Caco-2 (cell line): ENCODE measurements at regions of chr17 and their contacts with region 1.

Region 1: GRCh38 chr17:60392042-60392844 is at the start of gene USP32:
- DNase-seq: peak; percentile 98 to 99
- H3K4me3 ChIP-seq: peak within 1 kb of the TSS; percentile 89
- H3K4me3 Mint-ChIP-seq: peak within 1 kb of the TSS; percentile 92
- H3K27ac Mint-ChIP-seq: peak within 1 kb of the TSS; percentile 94
- H3K4me1 ChIP-seq: peaks cover 8% of the 10 kb centered on the region; the same call in 1 of the 2 replicates
- H3K4me1 Mint-ChIP-seq: peaks cover 13% of the 10 kb centered on the region
- H3K27me3 ChIP-seq: no peaks in the 10 kb centered on the region
- H3K27me3 Mint-ChIP-seq: no peaks in the 10 kb centered on the region
- CTCF ChIP-seq: peak; percentile 23 to 40
- total RNA-seq, gene USP32: 50.3 and 53.3 TPM in 2 replicates

Region 2: GRCh38 chr17:60231234-60231633 is 161.0 kb before region 1 on chr17:
- CTCF ChIA-PET with region 1: interaction called, 10 read pairs
- POLR2A ChIA-PET with region 1: no interaction called
- intact Hi-C with region 1: loop called (anchors 5 kb)
- DNase-seq: no peak
- H3K4me3 ChIP-seq: no peak overlapping the region
- H3K4me3 Mint-ChIP-seq: no peak overlapping the region
- H3K27ac Mint-ChIP-seq: peak overlapping the region; percentile 53
- H3K4me1 ChIP-seq: no peaks in the 10 kb centered on the region
- H3K4me1 Mint-ChIP-seq: no peaks in the 10 kb centered on the region
- H3K27me3 ChIP-seq: no peaks in the 10 kb centered on the region
- H3K27me3 Mint-ChIP-seq: no peaks in the 10 kb centered on the region
- CTCF ChIP-seq: peak; percentile 46 to 49

Region 3: DNA sequence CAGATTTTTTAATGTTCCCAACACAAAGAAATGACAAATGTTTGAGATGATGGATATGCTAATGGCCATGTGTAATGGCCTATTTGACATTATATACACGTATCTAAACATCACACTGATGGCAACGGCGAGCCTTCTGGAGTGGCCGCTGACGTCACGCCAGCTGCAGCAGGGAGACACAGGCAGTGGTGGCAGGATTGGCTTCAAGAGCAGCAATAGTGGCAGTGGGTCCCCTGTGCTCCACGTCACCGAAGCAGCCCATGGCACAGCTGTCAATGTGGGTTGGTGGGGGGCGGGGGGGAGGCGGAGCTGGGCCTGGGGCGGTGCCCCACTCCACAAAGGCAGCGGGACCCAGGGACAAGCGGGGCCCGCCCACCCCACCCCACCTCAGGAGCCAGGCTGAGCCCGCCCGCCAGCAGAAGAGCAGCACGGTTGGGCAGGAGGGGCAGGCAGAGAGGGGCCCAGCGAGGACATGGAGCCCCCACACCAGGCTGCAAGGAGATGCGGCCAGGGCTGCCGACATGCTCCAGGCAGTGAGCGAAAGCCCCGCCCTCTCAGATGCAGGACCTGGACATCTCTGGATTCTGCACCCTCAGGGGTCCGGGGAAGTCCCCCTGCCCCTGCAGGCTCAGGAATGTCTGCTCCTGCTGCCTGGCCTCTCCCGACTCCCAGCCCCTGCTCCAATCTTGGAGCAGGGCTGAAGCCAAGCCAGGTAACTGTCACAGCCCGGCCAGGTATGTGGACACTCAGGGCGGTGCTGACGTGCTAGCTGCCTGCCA is 64.9 kb before region 1 on chr17:
- CTCF ChIA-PET with region 1: no interaction called
- POLR2A ChIA-PET with region 1: no interaction called
- intact Hi-C with region 1: loop called (anchors 10 kb)
- DNase-seq: no peak
- H3K4me3 ChIP-seq: no peak overlapping the region
- H3K4me3 Mint-ChIP-seq: no peak overlapping the region
- H3K27ac Mint-ChIP-seq: peak overlapping the region; percentile 60
- H3K4me1 ChIP-seq: peaks cover 11% of the 10 kb centered on the region; the same call in 1 of the 2 replicates
- H3K4me1 Mint-ChIP-seq: no peaks in the 10 kb centered on the region
- H3K27me3 ChIP-seq: no peaks in the 10 kb centered on the region
- H3K27me3 Mint-ChIP-seq: no peaks in the 10 kb centered on the region
- CTCF ChIP-seq: no peak

Region 4: DNA sequence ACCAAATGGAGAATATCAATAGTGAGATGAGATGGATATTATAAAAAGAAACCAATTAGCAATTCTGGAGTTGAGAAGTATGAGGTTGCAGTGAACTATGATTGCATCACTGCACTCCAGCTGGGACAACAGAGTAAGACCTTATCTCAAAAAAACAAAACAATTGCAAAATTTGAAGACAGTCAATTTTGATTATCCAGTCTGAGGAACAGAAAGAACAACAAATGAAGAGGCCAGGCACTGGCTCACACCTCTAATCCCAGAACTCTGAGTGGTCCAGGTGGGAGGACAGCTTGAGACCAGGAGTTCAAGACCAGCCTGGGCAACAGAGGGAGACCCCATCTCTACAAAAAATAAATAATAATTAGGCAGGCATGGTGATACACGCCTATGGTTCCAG is 35.3 kb before region 1 on chr17:
- CTCF ChIA-PET with region 1: interaction called, 10 read pairs
- POLR2A ChIA-PET with region 1: interaction called, 13 read pairs
- intact Hi-C with region 1: loop called (anchors 1 kb)
- DNase-seq: no peak
- H3K4me3 ChIP-seq: no peak overlapping the region
- H3K4me3 Mint-ChIP-seq: no peak overlapping the region
- H3K27ac Mint-ChIP-seq: peak overlapping the region; percentile 47
- H3K4me1 ChIP-seq: peaks cover 12% of the 10 kb centered on the region; the same call in 1 of the 2 replicates
- H3K4me1 Mint-ChIP-seq: peaks cover 25% of the 10 kb centered on the region
- H3K27me3 ChIP-seq: no peaks in the 10 kb centered on the region
- H3K27me3 Mint-ChIP-seq: no peaks in the 10 kb centered on the region
- CTCF ChIP-seq: no peak

Region 5: GRCh38 chr17:60435244-60436167 is 43.3 kb after region 1 on chr17:
- CTCF ChIA-PET with region 1: no interaction called
- POLR2A ChIA-PET with region 1: no interaction called
- intact Hi-C with region 1: loop called (anchors 1 kb)
- DNase-seq: peak; percentile 66 to 79
- H3K4me3 ChIP-seq: no peak overlapping the region
- H3K4me3 Mint-ChIP-seq: no peak overlapping the region
- H3K27ac Mint-ChIP-seq: no peak overlapping the region
- H3K4me1 ChIP-seq: no peaks in the 10 kb centered on the region
- H3K4me1 Mint-ChIP-seq: peaks cover 9% of the 10 kb centered on the region
- H3K27me3 ChIP-seq: no peaks in the 10 kb centered on the region
- H3K27me3 Mint-ChIP-seq: no peaks in the 10 kb centered on the region
- CTCF ChIP-seq: peak; percentile 85 to 93

Region 6: DNA sequence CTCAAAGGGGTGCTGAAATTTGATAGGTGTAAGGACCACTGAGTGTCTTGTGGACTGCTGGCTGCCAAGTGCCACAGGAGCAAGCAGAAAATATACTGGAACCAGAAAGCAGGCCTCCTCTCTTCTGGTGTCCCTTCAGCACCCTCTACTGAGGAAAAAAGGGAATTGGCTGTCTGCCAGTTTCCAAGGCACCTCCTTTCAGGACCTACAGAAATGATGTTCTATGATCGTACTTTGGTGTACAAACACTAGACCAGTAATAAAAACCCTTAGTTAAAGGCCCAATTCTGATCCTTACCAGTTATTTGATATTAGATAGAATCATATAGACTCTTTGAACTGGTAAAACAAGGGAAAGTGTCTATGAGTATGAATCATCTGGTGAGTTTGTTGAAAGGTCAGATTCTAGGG is 249.6 kb after region 1 on chr17:
- CTCF ChIA-PET with region 1: interaction called, 14 read pairs
- POLR2A ChIA-PET with region 1: no interaction called
- intact Hi-C with region 1: no loop called
- DNase-seq: peak; percentile 76 to 79
- H3K4me3 ChIP-seq: no peak overlapping the region
- H3K4me3 Mint-ChIP-seq: no peak overlapping the region
- H3K27ac Mint-ChIP-seq: no peak overlapping the region
- H3K4me1 ChIP-seq: peaks cover 5% of the 10 kb centered on the region; the same call in 1 of the 2 replicates
- H3K4me1 Mint-ChIP-seq: no peaks in the 10 kb centered on the region
- H3K27me3 ChIP-seq: no peaks in the 10 kb centered on the region
- H3K27me3 Mint-ChIP-seq: no peaks in the 10 kb centered on the region
- CTCF ChIP-seq: peak; percentile 85

Region 7: DNA sequence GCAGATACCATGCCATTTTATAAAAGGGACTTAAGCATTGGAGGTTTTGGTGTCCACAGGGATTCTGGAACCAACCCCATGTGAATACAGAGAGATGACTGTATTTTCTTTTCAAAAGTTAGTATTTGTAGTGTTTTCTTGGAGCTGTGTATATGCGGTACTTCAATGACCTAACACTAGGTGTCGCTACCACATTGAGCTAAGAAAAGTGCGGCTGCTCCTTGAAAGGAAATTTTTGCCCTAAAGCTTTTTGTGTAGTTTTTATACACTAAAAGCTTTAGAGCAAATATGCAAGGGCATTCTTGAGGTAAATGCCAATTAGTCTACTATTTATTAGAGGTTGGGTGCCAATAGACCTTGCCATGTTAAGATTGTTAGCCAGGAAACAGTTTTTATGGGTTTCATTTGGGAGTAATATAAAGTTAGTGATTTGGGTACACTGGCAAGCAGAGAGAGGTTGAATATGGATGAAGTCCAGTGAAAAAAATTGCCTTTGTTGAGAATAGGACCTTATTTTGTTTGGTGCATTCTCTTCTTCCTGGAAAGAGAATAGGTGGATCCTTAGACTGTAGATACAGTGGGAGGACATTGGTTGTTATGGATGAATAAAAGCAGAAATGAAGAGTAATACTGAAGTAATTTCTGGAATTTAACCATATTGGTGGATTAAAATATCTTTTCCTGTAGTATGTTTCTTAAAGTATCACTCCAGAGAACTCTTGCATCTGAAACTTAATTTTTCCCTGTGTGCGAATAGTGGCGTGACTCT is 328.7 kb after region 1 on chr17:
- CTCF ChIA-PET with region 1: interaction called, 10 read pairs
- POLR2A ChIA-PET with region 1: no interaction called
- intact Hi-C with region 1: no loop called
- DNase-seq: peak; percentile 45 to 67
- H3K4me3 ChIP-seq: no peak overlapping the region
- H3K4me3 Mint-ChIP-seq: no peak overlapping the region
- H3K27ac Mint-ChIP-seq: no peak overlapping the region
- H3K4me1 ChIP-seq: no peaks in the 10 kb centered on the region
- H3K4me1 Mint-ChIP-seq: peaks cover 7% of the 10 kb centered on the region
- H3K27me3 ChIP-seq: no peaks in the 10 kb centered on the region
- H3K27me3 Mint-ChIP-seq: no peaks in the 10 kb centered on the region
- CTCF ChIP-seq: peak; percentile 87 to 90